Activated CD4-positive, alpha-beta memory T cell treated with anti-CD3 and anti-CD28 coated beads, Interleukin-2, amount 10 ng/mL, durations not matched to agents 7 days and 5 days (primary cell): ENCODE measurements at regions of chr9 and their contacts with region 1.

Region 1: DNA sequence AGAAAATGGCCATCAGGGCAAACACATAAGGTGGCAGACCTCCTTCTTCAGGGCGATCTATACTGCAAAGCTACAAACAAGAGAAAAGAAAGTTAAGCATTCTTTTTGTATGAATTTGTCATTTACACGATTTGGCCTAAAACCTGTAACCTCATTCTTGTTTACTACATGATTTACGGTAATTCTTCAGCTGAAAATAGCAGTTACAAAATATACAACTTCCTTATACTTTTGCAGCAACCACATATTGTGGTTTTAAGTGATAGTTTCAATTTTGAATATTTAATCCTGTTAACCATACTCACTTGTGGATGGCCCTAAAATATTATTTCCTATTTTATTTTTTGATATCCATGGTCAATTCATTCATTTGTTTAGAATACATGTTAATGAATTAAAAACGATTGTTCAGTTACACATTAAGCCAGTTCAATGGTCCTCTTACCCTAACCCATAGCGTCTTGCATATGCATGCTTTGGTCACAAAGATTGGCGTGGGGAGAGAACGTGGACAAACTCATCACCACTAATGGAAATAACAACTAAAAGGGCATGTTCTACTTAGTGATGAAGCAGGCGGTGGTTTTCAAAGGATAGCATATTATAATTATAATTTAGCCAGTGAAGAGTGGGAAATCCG is 16.6 kb downstream of the TUT7 start:
- DNase-seq: no peak
- H3K4me3 Mint-ChIP-seq: peak overlapping the region; percentile 78
- H3K27ac Mint-ChIP-seq: peak overlapping the region; percentile 87
- H3K4me1 Mint-ChIP-seq: peaks cover 51% of the 10 kb centered on the region
- H3K27me3 Mint-ChIP-seq: no peaks in the 10 kb centered on the region

Region 2: GRCh38 chr9:85876628-85877027 is 461.0 kb before region 1 on chr9:
- CTCF ChIA-PET with region 1: no interaction called
- POLR2A ChIA-PET with region 1: no interaction called
- DNase-seq: no peak
- H3K4me3 Mint-ChIP-seq: no peak overlapping the region
- H3K27ac Mint-ChIP-seq: no peak overlapping the region
- H3K4me1 Mint-ChIP-seq: no peaks in the 10 kb centered on the region
- H3K27me3 Mint-ChIP-seq: no peaks in the 10 kb centered on the region

Region 3: DNA sequence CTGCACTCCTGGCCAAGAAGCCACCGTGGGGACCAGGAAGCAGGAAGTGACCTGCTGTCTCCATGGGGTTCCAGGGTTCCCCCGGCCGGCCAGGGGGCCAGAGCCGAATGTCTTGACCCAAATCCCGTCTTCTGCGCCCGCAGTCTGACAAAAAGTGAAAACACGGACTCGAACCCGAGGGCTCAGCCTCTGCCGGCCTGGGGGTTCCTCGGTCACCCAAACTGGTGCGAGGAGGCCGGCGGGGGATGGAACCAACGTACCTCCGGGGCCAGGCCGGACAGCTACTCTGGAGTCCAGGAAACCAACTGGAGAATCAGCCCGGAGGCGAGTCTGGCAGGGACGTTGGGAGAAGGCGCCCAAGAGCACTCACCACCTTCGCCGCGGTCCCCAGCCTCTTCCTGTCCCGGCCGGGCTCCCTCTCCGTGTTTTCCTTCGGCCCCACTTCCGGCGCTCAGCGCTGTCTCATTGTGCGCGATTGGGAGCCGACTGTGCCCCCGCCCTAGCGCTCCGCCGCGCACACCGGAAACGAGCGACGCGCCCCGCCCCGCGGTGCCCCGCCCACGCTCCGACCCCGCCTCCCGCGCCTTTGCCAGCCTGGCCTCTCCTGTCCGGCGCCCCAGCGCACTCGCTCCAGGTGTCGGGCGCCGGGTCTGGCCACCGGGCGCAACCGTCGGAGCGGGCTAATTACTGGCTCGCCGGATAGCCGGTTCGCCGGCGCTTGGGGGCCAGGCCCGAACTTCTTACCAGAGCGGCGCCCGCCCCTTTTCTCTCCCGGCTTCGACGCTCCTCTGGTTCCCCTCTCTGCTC is 16.6 kb after region 1 on chr9 and contains the start of gene TUT7:
- CTCF ChIA-PET with region 1: interaction called, 3 read pairs
- POLR2A ChIA-PET with region 1: interaction called, 18 read pairs
- DNase-seq: peak; percentile 95
- H3K4me3 Mint-ChIP-seq: peak within 1 kb of the TSS; percentile 96
- H3K27ac Mint-ChIP-seq: peak within 1 kb of the TSS; percentile 98
- H3K4me1 Mint-ChIP-seq: peaks cover 40% of the 10 kb centered on the region
- H3K27me3 Mint-ChIP-seq: peaks cover 6% of the 10 kb centered on the region
- total RNA-seq, gene TUT7: 59.3 to 63.1 TPM

Region 4: GRCh38 chr9:86389628-86390027 is 52.0 kb after region 1 on chr9:
- CTCF ChIA-PET with region 1: no interaction called
- POLR2A ChIA-PET with region 1: no interaction called
- DNase-seq: no peak
- H3K4me3 Mint-ChIP-seq: no peak overlapping the region
- H3K27ac Mint-ChIP-seq: no peak overlapping the region
- H3K4me1 Mint-ChIP-seq: peaks cover 4% of the 10 kb centered on the region
- H3K27me3 Mint-ChIP-seq: peaks cover 27% of the 10 kb centered on the region